ENCODE measurements at regions of chr10 and their contacts with region 1.

Region 1: DNA sequence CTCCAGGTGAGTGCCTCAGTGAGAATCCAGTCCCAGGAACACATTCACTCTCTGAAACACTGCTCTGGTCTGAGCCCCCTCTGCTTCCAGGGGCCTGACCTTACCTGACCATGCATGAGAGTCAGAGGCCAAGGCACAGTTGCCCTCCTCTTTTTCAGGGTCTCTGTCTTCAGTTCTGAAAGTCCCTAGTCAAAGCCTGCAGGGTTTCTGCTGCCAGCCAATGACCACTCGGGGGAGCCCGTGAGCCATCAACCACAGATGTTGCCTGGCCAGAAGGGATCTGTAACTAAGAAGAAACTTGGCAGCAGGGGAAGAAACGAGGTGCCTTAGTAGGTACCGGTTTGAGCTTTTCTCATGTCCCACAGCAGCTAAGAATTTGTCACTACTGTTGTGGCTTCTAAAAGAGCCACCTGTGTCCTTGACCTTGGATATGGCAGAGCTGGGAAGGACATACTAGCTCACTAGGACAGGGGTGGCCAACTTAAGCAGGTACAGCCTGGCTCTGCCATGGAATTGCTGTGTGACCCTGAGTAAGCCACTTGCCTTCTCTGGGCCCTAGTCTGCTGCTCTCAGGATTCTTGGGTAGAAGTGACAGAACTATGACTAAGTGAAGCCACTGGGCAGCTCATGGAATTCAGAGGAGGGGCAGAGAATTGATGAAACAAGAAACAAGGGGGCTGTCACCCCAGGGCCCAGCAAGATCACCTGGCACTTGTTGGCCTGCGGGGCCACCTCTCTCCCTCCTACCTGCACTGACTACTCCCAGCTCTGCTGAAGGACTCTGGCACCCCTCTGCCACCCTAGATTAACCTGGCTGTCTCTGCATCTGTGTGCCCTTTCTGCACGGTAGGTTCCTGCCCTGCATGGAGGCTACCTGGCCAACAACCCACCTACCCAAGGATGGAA is 83.8 kb upstream of the GPR26 start:
- DNase-seq: peak; percentile 76
- H3K4me3 Mint-ChIP-seq: no peak overlapping the region
- H3K27ac Mint-ChIP-seq: no peak overlapping the region
- H3K4me1 Mint-ChIP-seq: no peaks in the 10 kb centered on the region
- H3K27me3 Mint-ChIP-seq: peaks cover 74% of the 10 kb centered on the region
- CTCF ChIP-seq: peak; percentile 73

Region 2: GRCh38 chr10:123132576-123133477 is 449.5 kb before region 1 on chr10:
- CTCF ChIA-PET with region 1: no interaction called
- POLR2A ChIA-PET with region 1: no interaction called
- intact Hi-C with region 1: no loop called
- DNase-seq: peak; percentile 84
- H3K4me3 Mint-ChIP-seq: peak overlapping the region; percentile 51
- H3K27ac Mint-ChIP-seq: no peak overlapping the region
- H3K4me1 Mint-ChIP-seq: peaks cover 8% of the 10 kb centered on the region
- H3K27me3 Mint-ChIP-seq: peaks cover 24% of the 10 kb centered on the region
- CTCF ChIP-seq: peak; percentile 87

Region 3: GRCh38 chr10:123759501-123760031 is 177.2 kb after region 1 on chr10:
- CTCF ChIA-PET with region 1: no interaction called
- POLR2A ChIA-PET with region 1: no interaction called
- intact Hi-C with region 1: loop called (anchors 10 kb)
- DNase-seq: no peak
- H3K4me3 Mint-ChIP-seq: no peak overlapping the region
- H3K27ac Mint-ChIP-seq: no peak overlapping the region
- H3K4me1 Mint-ChIP-seq: no peaks in the 10 kb centered on the region
- H3K27me3 Mint-ChIP-seq: peaks cover 82% of the 10 kb centered on the region
- CTCF ChIP-seq: no peak

Region 4: DNA sequence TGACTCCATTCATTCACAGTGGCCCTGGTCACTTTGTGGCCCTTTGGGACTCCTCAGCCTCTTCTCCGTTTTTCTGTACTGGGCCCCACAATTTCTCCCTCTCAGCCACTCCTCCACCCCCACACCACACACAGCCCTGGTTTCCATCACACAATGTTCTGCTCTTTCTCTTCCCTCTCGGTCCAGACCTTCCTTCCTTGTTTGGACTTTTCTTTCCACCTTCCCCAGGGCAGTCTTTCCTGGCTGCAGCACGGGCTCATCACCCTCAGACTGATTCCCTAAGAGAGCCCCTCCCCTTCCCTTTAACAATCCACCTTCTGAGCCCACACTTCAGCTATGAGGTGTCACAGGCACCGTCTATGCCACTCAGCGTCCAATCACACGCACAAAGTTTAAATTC is 283.5 kb after region 1 on chr10:
- CTCF ChIA-PET with region 1: interaction called, 4 read pairs
- POLR2A ChIA-PET with region 1: no interaction called
- intact Hi-C with region 1: loop called (anchors 1 kb)
- DNase-seq: no peak
- H3K4me3 Mint-ChIP-seq: no peak overlapping the region
- H3K27ac Mint-ChIP-seq: no peak overlapping the region
- H3K4me1 Mint-ChIP-seq: no peaks in the 10 kb centered on the region
- H3K27me3 Mint-ChIP-seq: peaks cover 31% of the 10 kb centered on the region
- CTCF ChIP-seq: no peak

Region 5: DNA sequence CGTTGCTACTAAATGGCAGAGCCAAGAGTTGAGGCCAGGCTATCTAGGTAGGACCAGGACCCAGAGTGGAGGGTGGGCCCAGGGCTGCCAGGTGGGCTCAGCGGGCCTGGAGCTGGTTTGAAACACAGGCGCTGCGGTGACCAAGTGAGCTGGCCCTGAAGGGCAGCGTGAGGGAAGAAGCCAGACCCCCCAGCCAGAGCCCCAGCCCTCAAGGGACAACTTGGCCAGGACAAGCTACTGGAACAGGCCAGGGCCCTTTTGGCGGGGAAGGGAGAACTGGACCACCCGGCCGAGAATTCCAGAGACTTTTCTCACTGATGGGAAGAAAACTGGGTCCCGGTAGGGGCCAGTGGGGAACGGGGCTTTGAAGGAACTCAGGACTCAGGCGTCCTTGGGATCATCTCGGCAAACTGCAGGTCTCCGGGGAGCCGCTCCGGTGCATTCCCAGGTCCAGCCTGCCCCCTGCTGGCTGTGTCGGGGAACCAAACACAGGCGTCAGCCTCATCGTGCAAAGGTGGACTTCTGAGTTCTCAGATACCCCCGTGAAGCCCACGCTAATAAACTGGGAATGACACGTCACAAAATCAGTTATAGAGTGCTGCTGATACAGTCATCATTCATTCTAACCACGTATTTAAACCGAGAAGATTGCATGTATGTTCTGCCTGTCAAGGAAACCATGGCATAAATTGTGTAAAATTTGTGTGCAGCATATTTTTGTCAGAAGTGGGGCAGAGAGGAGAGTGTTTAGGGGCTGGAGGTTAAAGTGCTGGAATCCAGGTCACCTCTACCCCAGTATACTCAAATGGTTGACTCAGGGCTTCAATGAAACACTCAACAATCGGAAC is 385.3 kb after region 1 on chr10:
- CTCF ChIA-PET with region 1: interaction called, 213 read pairs
- POLR2A ChIA-PET with region 1: no interaction called
- intact Hi-C with region 1: loop called (anchors 1 kb)
- DNase-seq: peak; percentile 68
- H3K4me3 Mint-ChIP-seq: no peak overlapping the region
- H3K27ac Mint-ChIP-seq: no peak overlapping the region
- H3K4me1 Mint-ChIP-seq: no peaks in the 10 kb centered on the region
- H3K27me3 Mint-ChIP-seq: peaks cover 87% of the 10 kb centered on the region
- CTCF ChIP-seq: peak; percentile 92

Region 6: DNA sequence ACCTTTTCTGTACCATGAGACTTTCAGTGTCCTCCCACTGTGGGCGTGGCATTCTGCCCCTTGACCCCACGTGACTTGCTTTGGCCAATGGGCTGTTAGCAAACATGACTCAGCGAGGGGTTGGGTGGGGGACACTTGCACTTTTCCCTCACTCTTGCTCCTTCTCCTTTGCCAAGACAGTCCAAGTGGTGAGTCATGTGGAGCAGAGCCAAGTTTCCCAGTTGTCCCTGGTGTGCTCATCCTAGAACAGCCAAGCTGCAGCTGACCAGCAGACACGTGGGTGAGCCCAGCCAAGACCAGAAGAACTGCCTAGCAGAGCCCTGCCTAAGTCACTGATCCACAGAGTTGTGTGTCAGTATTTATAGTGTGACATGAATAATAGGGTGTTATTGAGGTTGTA is 392.1 kb after region 1 on chr10:
- CTCF ChIA-PET with region 1: interaction called, 213 read pairs
- POLR2A ChIA-PET with region 1: no interaction called
- intact Hi-C with region 1: no loop called
- DNase-seq: peak; percentile 90
- H3K4me3 Mint-ChIP-seq: no peak overlapping the region
- H3K27ac Mint-ChIP-seq: no peak overlapping the region
- H3K4me1 Mint-ChIP-seq: no peaks in the 10 kb centered on the region
- H3K27me3 Mint-ChIP-seq: peaks cover 51% of the 10 kb centered on the region
- CTCF ChIP-seq: no peak

Region 7: DNA sequence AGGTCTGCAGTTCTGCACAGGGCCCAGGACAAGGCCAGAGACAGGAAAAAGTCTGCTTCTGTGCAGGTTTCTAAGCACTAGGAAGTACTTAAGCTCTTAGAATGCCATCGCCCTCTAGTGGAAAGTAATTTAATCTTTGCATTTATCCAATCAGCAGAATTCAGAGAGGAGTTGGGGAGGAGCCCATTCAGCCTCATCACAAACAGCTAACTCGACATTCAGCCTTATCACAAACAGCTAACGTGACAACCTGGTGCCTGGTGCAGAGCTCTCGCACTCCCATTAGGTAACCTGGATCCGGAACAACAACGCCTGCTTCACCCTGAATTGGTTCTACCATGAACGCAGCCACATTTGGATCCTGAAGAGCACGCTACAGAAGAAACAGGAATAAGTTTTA is 821.2 kb after region 1 on chr10:
- CTCF ChIA-PET with region 1: no interaction called
- POLR2A ChIA-PET with region 1: no interaction called
- intact Hi-C with region 1: loop called (anchors 5 kb)
- DNase-seq: peak; percentile 81
- H3K4me3 Mint-ChIP-seq: no peak overlapping the region
- H3K27ac Mint-ChIP-seq: no peak overlapping the region
- H3K4me1 Mint-ChIP-seq: no peaks in the 10 kb centered on the region
- H3K27me3 Mint-ChIP-seq: no peaks in the 10 kb centered on the region
- CTCF ChIP-seq: peak; percentile 46

Measured in MCF 10A (cell line).